Colonic mucosa (tissue), 4 donors: ENCODE measurements at regions of chr20 and their contacts with region 1.

Region 1: GRCh38 chr20:48904365-48905296 is 16.9 kb upstream of the ARFGEF2 start:
- DNase-seq: peak; percentile 58
- H3K4me3 ChIP-seq: no peak overlapping the region
- H3K27ac ChIP-seq: no peak overlapping the region
- H3K4me1 ChIP-seq: no peaks in the 10 kb centered on the region
- H3K27me3 ChIP-seq: no peaks in the 10 kb centered on the region
- CTCF ChIP-seq: peak; percentile 82

Region 2: DNA sequence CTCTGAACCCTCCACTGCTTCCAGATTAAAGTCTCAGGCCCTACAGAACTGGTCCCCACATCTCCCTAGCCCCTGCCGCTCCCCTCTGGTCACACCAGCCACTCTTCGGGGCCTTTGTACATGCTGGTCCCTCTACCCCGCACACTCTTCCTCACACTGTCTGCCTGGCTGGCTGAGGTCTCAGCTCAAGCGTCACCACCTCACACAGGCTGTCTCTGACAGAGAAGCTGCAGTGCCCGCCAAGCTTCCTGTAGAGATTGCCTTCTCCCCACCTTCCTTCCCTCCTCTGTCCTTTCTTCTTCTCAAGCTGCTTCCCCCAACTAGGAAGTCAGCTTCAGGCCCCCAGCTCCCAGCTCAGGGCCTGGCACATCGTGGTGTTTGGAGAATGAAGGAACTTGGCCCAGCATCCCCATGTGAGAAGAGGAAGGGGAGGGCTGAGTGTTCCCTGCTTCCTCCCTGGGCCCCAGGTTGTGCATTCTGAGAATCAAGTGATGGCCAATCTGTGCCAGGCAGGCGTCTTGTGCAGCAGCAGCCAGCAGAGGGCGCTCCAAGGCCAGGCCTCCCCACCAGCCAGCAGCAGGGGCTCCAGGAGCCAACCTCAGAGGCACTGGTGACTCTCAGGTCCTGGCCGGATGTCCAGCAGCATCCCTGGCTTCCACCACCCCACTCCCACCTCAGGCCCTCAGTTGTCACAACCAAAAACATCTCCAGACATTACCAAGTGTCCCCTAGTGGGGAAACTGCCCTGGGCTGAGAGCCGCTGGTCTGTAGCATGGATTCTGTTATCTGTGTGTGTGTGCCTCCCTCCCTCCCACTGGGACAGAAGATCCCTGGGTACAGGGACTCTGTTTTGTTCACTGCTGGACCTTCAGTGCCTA is 269.0 kb before region 1 on chr20:
- intact Hi-C with region 1: loop called (anchors 5 kb)
- DNase-seq: peak; percentile 58
- H3K4me3 ChIP-seq: no peak overlapping the region
- H3K27ac ChIP-seq: no peak overlapping the region
- H3K4me1 ChIP-seq: no peaks in the 10 kb centered on the region
- H3K27me3 ChIP-seq: no peaks in the 10 kb centered on the region
- CTCF ChIP-seq: peak; percentile 79

Region 3: GRCh38 chr20:48657475-48658470 is 246.9 kb before region 1 on chr20:
- intact Hi-C with region 1: loop called (anchors 1 kb)
- DNase-seq: peak; percentile 73
- H3K4me3 ChIP-seq: no peak overlapping the region
- H3K27ac ChIP-seq: no peak overlapping the region
- H3K4me1 ChIP-seq: no peaks in the 10 kb centered on the region
- H3K27me3 ChIP-seq: no peaks in the 10 kb centered on the region
- CTCF ChIP-seq: peak; percentile 88